ENCODE measurements at regions of chr12 and their contacts with region 1.

Region 1: GRCh38 chr12:118061011-118061875 is at the start of gene WSB2:
- DNase-seq: peak; percentile 88
- H3K4me3 ChIP-seq: peak within 1 kb of the TSS; percentile 71 to 80
- H3K27ac ChIP-seq: peak within 1 kb of the TSS; percentile 88 to 97
- H3K4me1 ChIP-seq: peaks cover 10 to 14% of the 10 kb centered on the region in 2 experiments; a peak in 3 of 4 replicates
- H3K27me3 ChIP-seq: no peaks in the 10 kb centered on the region
- CTCF ChIP-seq: no peak
- EP300 ChIP-seq: no peak
- RAD21 ChIP-seq: no peak
- polyA plus RNA-seq, gene WSB2: 54.4 and 62.6 TPM in 2 replicates

Region 2: DNA sequence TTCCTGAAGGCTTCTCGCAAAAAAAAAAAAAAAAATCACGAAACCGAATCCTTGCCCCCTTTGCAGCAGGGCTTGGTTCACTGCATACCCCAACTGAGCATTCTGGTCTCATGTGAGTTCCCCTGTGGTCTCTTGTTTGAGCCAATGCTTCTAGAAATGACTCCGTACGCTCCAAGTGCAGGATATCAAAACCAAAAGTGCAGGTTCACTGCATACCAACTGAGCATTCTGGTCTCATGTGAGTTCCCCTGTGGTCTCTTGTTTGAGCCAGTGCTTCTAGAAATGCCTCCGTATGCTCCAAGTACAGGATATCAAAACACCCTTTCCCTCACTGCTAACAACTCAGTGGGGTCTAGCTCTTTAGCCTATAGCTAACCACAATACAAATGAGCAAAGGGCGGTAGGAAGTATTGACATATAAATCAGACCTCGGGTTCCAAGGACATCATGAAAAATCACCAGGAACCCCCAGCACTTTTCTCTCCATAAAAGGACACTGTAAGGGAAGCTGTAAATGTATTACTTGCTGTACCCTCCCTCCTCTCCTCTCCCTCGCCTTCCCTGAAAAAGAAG is 493.5 kb before region 1 on chr12:
- CTCF ChIA-PET with region 1: no interaction called
- POLR2A ChIA-PET with region 1: no interaction called
- DNase-seq: no peak
- H3K4me3 ChIP-seq: no peak overlapping the region
- H3K27ac ChIP-seq: no peak overlapping the region
- H3K4me1 ChIP-seq: peaks cover 0 to 1% of the 10 kb centered on the region in 2 experiments; a peak in 1 of 4 replicates
- H3K27me3 ChIP-seq: no peaks in the 10 kb centered on the region
- CTCF ChIP-seq: no peak
- EP300 ChIP-seq: no peak
- RAD21 ChIP-seq: no peak

Region 3: DNA sequence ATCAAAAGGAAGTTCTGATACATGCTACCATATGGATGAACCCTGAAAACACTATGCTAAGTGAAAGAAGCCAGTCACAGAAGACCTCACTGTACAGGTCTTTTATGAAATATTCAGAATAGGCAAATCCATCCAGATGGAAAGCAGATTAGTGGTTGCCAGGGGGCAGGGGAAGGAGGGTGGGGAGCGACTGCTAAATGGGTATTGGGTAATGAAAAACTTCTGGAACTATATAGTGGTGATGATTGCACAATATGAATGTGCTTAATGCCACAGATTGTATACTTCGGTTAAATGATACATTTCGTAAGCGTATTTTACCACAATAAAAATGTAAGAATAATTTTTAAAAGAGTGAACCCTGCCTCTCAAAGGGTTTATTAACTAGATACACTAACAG is 80.6 kb before region 1 on chr12:
- CTCF ChIA-PET with region 1: no interaction called
- POLR2A ChIA-PET with region 1: no interaction called
- DNase-seq: no peak
- H3K4me3 ChIP-seq: no peak overlapping the region
- H3K27ac ChIP-seq: no peak overlapping the region
- H3K4me1 ChIP-seq: peaks cover 0 to 2% of the 10 kb centered on the region in 2 experiments; a peak in 1 of 4 replicates
- H3K27me3 ChIP-seq: no peaks in the 10 kb centered on the region
- CTCF ChIP-seq: no peak
- EP300 ChIP-seq: no peak
- RAD21 ChIP-seq: no peak

Region 4: DNA sequence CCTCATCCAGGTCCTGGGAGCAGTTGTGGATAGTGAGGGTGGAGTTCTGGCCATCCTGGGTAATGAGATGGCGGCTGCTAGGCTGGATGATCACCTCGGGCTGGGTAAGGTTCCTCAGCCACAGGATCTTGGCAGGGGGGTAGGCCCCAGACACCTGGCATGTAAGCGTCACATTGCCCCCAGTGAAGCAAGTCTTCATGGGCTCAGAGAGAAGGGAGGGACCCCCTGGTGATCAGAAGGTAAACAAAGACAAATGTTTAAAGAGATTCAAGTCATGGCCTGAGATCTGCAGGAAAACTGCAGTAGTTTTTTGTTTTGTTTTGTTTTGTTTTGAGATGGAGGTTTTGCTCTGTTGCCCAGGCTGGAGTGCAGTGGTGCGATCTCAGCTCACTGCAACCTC is 12.5 kb after region 1 on chr12:
- CTCF ChIA-PET with region 1: interaction called, 16 read pairs
- POLR2A ChIA-PET with region 1: interaction called, 5 read pairs
- DNase-seq: no peak
- H3K4me3 ChIP-seq: no peak overlapping the region
- H3K27ac ChIP-seq: no peak overlapping the region
- H3K4me1 ChIP-seq: no peaks in the 10 kb centered on the region
- H3K27me3 ChIP-seq: no peaks in the 10 kb centered on the region
- CTCF ChIP-seq: no peak
- EP300 ChIP-seq: no peak
- RAD21 ChIP-seq: no peak

Measured in SK-N-SH (cell line).